Activated CD8-positive, alpha-beta T cell treated with anti-CD3 and anti-CD28 coated beads for 36 hours (primary cell): ENCODE measurements at regions of chr1 and their contacts with region 1.

Region 1: DNA sequence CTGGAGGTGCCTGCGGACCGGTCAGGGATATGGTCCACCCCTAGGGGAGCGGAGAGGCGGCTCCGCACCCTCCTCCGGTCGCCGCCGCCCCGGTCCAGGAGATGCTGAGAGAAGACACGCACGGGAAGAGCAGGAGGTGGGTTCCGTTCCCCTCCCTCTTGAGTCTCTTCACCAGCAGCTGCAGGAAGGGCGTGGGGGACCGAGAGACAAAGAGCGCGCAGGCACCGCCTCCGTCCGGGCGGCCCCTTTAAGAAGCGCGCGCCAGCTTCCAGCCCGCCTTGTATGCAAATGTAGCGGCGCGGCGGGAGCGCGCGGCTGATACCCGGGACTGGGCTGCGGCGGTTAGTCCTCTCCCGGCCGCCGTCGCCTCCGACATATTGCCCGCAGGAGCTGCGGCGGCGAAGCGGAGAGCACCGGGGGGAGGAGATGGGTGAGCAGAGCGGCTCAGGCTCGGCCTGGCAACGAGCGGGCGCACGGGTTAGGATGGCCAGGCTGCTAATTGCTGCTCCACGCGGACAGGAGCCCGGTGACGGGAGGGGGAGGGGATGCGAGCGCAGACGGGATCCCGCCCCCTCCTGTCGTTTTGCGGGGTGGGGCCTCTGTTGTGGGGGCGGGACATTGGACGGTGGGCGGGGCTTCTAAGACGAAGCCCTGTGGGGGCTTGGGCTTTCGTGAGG is at the start of gene TMEM39B:
- DNase-seq: peak; percentile 97
- ATAC-seq: peak; percentile 88
- H3K4me3 Mint-ChIP-seq: peak within 1 kb of the TSS; percentile 80
- H3K27ac Mint-ChIP-seq: peak within 1 kb of the TSS; percentile 90
- H3K4me1 Mint-ChIP-seq: peaks cover 30% of the 10 kb centered on the region
- H3K27me3 Mint-ChIP-seq: no peaks in the 10 kb centered on the region
- CTCF ChIP-seq: no peak
- total RNA-seq, gene TMEM39B: 25.3 to 27.7 TPM

Region 2: GRCh38 chr1:32013386-32014198 is 59.2 kb before region 1 on chr1 and contains the start of gene KHDRBS1:
- CTCF ChIA-PET with region 1: no interaction called
- POLR2A ChIA-PET with region 1: interaction called, 17 read pairs
- intact Hi-C with region 1: no loop called
- DNase-seq: peak; percentile 98
- ATAC-seq: peak; percentile 89
- H3K4me3 Mint-ChIP-seq: peak within 1 kb of the TSS; percentile 82
- H3K27ac Mint-ChIP-seq: peak within 1 kb of the TSS; percentile 95
- H3K4me1 Mint-ChIP-seq: peaks cover 22% of the 10 kb centered on the region
- H3K27me3 Mint-ChIP-seq: no peaks in the 10 kb centered on the region
- CTCF ChIP-seq: no peak
- total RNA-seq, gene KHDRBS1: 201 to 203 TPM

Region 3: DNA sequence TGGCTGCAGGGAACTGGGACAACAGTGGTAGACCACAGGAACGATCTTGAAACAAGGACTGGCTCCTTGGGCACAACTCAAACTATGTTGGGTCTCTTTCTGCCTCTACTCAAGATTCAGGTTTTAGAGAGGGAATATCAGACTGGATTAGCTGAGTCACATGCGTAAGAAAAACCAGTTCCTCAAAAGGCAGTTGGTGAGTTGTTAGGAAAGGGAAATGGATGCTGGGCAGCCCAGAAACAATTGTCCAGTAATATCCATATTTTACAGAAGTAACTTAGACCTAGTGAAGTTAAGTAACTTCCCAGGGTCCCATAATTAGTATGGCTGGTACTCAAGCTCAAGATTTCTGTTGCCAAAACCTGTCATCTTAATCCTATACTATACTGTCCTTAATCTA is 27.0 kb before region 1 on chr1:
- CTCF ChIA-PET with region 1: no interaction called
- POLR2A ChIA-PET with region 1: no interaction called
- intact Hi-C with region 1: no loop called
- DNase-seq: no peak
- ATAC-seq: no peak
- H3K4me3 Mint-ChIP-seq: no peak overlapping the region
- H3K27ac Mint-ChIP-seq: no peak overlapping the region
- H3K4me1 Mint-ChIP-seq: peaks cover 18% of the 10 kb centered on the region
- H3K27me3 Mint-ChIP-seq: no peaks in the 10 kb centered on the region
- CTCF ChIP-seq: no peak

Region 4: GRCh38 chr1:32107742-32108661 is 35.2 kb after region 1 on chr1 and contains the start of gene KPNA6:
- CTCF ChIA-PET with region 1: interaction called, 22 read pairs
- POLR2A ChIA-PET with region 1: interaction called, 27 read pairs
- intact Hi-C with region 1: no loop called
- DNase-seq: peak; percentile 95
- ATAC-seq: peak; percentile 88
- H3K4me3 Mint-ChIP-seq: peak within 1 kb of the TSS; percentile 92
- H3K27ac Mint-ChIP-seq: peak within 1 kb of the TSS; percentile 98
- H3K4me1 Mint-ChIP-seq: peaks cover 33% of the 10 kb centered on the region
- H3K27me3 Mint-ChIP-seq: no peaks in the 10 kb centered on the region
- CTCF ChIP-seq: no peak
- total RNA-seq, gene KPNA6: 70.8 to 74.3 TPM

Region 5: DNA sequence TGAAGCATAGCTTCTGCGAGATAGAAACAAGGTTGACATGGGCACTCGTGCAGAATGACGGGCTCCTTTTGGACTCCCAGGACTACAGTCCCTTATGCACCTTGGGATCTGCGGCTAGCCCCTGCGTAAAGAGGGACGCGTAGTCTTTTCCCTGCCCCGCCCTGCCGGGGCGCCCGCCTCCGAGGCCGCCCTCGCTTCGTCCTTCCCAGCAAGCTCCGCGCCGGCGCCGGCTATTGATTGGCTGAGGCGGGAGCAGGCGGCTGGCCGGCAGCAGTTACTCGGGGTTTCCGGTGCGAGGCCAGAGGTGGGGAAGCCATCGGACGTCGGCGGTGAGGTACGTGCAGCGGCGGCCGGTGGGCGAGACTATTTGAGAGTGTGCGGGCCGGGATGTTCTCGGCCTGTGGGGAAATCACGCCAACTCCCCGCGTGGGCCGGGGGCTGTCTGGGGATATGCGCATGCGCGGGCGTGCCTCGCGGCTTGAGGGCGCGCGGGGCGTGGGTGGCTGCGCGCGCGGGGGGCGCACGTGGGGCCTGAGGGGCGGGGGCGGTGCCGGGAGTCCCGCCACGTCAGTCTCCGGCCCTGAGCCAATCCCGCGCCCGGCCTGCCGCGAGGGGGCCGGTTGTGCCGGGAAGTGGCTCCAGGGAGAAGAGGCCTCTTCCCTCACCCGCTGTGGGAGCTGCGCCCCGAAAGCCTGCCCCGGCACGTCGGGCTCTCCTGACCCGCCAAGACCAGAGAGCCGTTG is 106.9 kb after region 1 on chr1 and contains the start of gene TXLNA:
- CTCF ChIA-PET with region 1: no interaction called
- POLR2A ChIA-PET with region 1: interaction called, 10 read pairs
- intact Hi-C with region 1: no loop called
- DNase-seq: peak; percentile 94
- ATAC-seq: peak; percentile 92
- H3K4me3 Mint-ChIP-seq: peak within 1 kb of the TSS; percentile 97
- H3K27ac Mint-ChIP-seq: peak within 1 kb of the TSS; percentile 98
- H3K4me1 Mint-ChIP-seq: peaks cover 38% of the 10 kb centered on the region
- H3K27me3 Mint-ChIP-seq: no peaks in the 10 kb centered on the region
- CTCF ChIP-seq: no peak
- total RNA-seq, gene TXLNA: 71.5 to 73.3 TPM